ENCODE measurements at regions of chr11 and their contacts with region 1.

Region 1: DNA sequence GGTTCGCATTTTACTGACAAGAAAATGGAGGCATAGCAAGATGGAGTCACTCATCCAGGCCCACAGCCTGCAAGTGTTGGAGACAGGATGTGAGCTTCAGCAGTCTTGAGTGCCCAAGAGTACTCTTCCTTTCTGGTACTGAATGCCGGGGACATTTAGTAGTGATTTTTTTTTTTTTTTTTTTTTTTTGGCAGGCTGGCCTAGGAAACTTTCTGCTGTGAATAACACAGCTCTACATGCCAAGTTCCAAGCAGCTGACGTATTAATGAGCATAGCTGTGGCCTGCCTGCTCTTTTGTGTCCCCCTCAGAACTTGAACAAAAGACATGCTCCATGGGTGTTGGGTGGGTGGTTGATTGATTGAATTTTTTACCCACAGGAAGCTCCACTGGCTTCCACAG is 195.5 kb upstream of the CADM1 start:
- DNase-seq: no peak
- H3K4me3 ChIP-seq: no peak overlapping the region
- H3K27ac ChIP-seq: no peak overlapping the region
- H3K4me1 ChIP-seq: no peaks in the 10 kb centered on the region
- H3K27me3 ChIP-seq: no peaks in the 10 kb centered on the region
- CTCF ChIP-seq: no peak

Region 2: GRCh38 chr11:115396533-115396932 is 303.2 kb before region 1 on chr11:
- CTCF ChIA-PET with region 1: no interaction called
- POLR2A ChIA-PET with region 1: no interaction called
- intact Hi-C with region 1: no loop called
- DNase-seq: no peak
- H3K4me3 ChIP-seq: no peak overlapping the region
- H3K27ac ChIP-seq: no peak overlapping the region
- H3K4me1 ChIP-seq: no peaks in the 10 kb centered on the region
- H3K27me3 ChIP-seq: no peaks in the 10 kb centered on the region
- CTCF ChIP-seq: no peak

Region 3: GRCh38 chr11:115581871-115582639 is 117.7 kb before region 1 on chr11:
- CTCF ChIA-PET with region 1: no interaction called
- POLR2A ChIA-PET with region 1: interaction called, 11 read pairs
- intact Hi-C with region 1: no loop called
- DNase-seq: peak; percentile 6
- H3K4me3 ChIP-seq: no peak overlapping the region
- H3K27ac ChIP-seq: no peak overlapping the region
- H3K4me1 ChIP-seq: no peaks in the 10 kb centered on the region
- H3K27me3 ChIP-seq: no peaks in the 10 kb centered on the region
- CTCF ChIP-seq: no peak

Region 4: GRCh38 chr11:115653926-115654325 is 45.8 kb before region 1 on chr11:
- CTCF ChIA-PET with region 1: no interaction called
- POLR2A ChIA-PET with region 1: no interaction called
- intact Hi-C with region 1: no loop called
- DNase-seq: no peak
- H3K4me3 ChIP-seq: no peak overlapping the region
- H3K27ac ChIP-seq: no peak overlapping the region
- H3K4me1 ChIP-seq: peaks cover 4% of the 10 kb centered on the region
- H3K27me3 ChIP-seq: peaks cover 7% of the 10 kb centered on the region
- CTCF ChIP-seq: no peak

Measured in A673 (cell line).